ENCODE measurements at regions of chr11 and their contacts with region 1.

Region 1: GRCh38 chr11:9460322-9461067 is at the start of gene ZNF143:
- DNase-seq: peak; percentile 99 to 100 (median 100)
- ATAC-seq: peak; percentile 89
- H3K4me3 ChIP-seq: peak within 1 kb of the TSS; percentile 89 to 93
- H3K4me3 Mint-ChIP-seq: peak within 1 kb of the TSS; percentile 92
- H3K27ac ChIP-seq: peak within 1 kb of the TSS; percentile 98
- H3K27ac Mint-ChIP-seq: peak within 1 kb of the TSS; percentile 97
- H3K4me1 ChIP-seq: peaks cover 31% of the 10 kb centered on the region
- H3K4me1 Mint-ChIP-seq: peaks cover 33% of the 10 kb centered on the region
- H3K27me3 ChIP-seq: no peaks in the 10 kb centered on the region
- H3K27me3 Mint-ChIP-seq: no peaks in the 10 kb centered on the region
- CTCF ChIP-seq: no peak
- total RNA-seq, gene ZNF143: 13.4 to 15.4 TPM

Region 2: GRCh38 chr11:8911029-8911826 is 549.3 kb before region 1 on chr11 and contains the start of gene AKIP1:
- CTCF ChIA-PET with region 1: no interaction called
- POLR2A ChIA-PET with region 1: interaction called, 4 read pairs
- intact Hi-C with region 1: loop called in 1 of 2 experiments (anchors 2 kb)
- DNase-seq: peak; percentile 37 to 93 (median 83)
- ATAC-seq: peak; percentile 77
- H3K4me3 ChIP-seq: peak within 1 kb of the TSS; percentile 76 to 94
- H3K4me3 Mint-ChIP-seq: peak within 1 kb of the TSS; percentile 91
- H3K27ac ChIP-seq: peak within 1 kb of the TSS; percentile 51 to 78
- H3K27ac Mint-ChIP-seq: peak within 1 kb of the TSS; percentile 90
- H3K4me1 ChIP-seq: peaks cover 23% of the 10 kb centered on the region
- H3K4me1 Mint-ChIP-seq: peaks cover 37% of the 10 kb centered on the region
- H3K27me3 ChIP-seq: no peaks in the 10 kb centered on the region
- H3K27me3 Mint-ChIP-seq: no peaks in the 10 kb centered on the region
- CTCF ChIP-seq: no peak
- total RNA-seq, gene AKIP1: 3.9 to 4.2 TPM

Region 3: GRCh38 chr11:9250139-9250582 is 210.3 kb before region 1 on chr11:
- CTCF ChIA-PET with region 1: no interaction called
- POLR2A ChIA-PET with region 1: interaction called, 6 read pairs
- intact Hi-C with region 1: loop called in 1 of 2 experiments (anchors 1 kb)
- DNase-seq: peak in 5 of 9 experiments; percentile 46 to 85 (median 55)
- ATAC-seq: peak; percentile 87
- H3K4me3 ChIP-seq: peak overlapping the region in 1 of 2 experiments; percentile 26
- H3K4me3 Mint-ChIP-seq: peak overlapping the region; percentile 66
- H3K27ac ChIP-seq: peak overlapping the region in 1 of 2 experiments; percentile 7
- H3K27ac Mint-ChIP-seq: peak overlapping the region; percentile 81
- H3K4me1 ChIP-seq: peaks cover 71% of the 10 kb centered on the region
- H3K4me1 Mint-ChIP-seq: peaks cover 64% of the 10 kb centered on the region
- H3K27me3 ChIP-seq: no peaks in the 10 kb centered on the region
- H3K27me3 Mint-ChIP-seq: no peaks in the 10 kb centered on the region
- CTCF ChIP-seq: no peak

Region 4: GRCh38 chr11:9363954-9364912 is 96.3 kb before region 1 on chr11:
- CTCF ChIA-PET with region 1: no interaction called
- POLR2A ChIA-PET with region 1: interaction called, 5 read pairs
- intact Hi-C with region 1: loop called in 1 of 2 experiments (anchors 1 kb)
- DNase-seq: peak; percentile 43 to 91 (median 76)
- ATAC-seq: peak; percentile 88
- H3K4me3 ChIP-seq: peak overlapping the region; percentile 60 to 66
- H3K4me3 Mint-ChIP-seq: peak overlapping the region; percentile 87
- H3K27ac ChIP-seq: peak overlapping the region; percentile 61 to 93
- H3K27ac Mint-ChIP-seq: peak overlapping the region; percentile 85
- H3K4me1 ChIP-seq: peaks cover 10% of the 10 kb centered on the region
- H3K4me1 Mint-ChIP-seq: peaks cover 14% of the 10 kb centered on the region
- H3K27me3 ChIP-seq: no peaks in the 10 kb centered on the region
- H3K27me3 Mint-ChIP-seq: no peaks in the 10 kb centered on the region
- CTCF ChIP-seq: no peak

Region 5: DNA sequence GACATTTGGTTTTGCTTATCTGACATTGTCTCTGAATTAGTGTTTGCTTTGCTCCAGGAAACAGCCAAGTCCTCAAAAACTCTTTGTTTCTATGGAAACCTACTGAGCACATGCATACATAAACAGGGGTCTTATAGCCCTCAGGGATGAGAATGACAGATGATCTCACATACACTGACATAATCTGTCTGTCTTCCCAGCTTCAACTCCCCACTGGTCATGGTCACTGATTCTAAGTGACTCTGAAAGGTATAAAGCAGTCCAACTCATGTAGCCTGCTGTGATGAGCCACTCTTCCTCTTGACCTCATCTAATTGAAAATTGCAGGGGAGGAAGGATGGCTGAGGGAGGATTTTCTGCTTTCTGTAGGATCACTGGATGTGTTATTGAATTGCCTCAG is 12.9 kb after region 1 on chr11:
- CTCF ChIA-PET with region 1: interaction called, 4 read pairs
- POLR2A ChIA-PET with region 1: interaction called, 10 read pairs
- intact Hi-C with region 1: no loop called
- DNase-seq: no peak
- ATAC-seq: no peak
- H3K4me3 ChIP-seq: no peak overlapping the region
- H3K4me3 Mint-ChIP-seq: no peak overlapping the region
- H3K27ac ChIP-seq: no peak overlapping the region
- H3K27ac Mint-ChIP-seq: no peak overlapping the region
- H3K4me1 ChIP-seq: no peaks in the 10 kb centered on the region
- H3K4me1 Mint-ChIP-seq: peaks cover 5% of the 10 kb centered on the region
- H3K27me3 ChIP-seq: no peaks in the 10 kb centered on the region
- H3K27me3 Mint-ChIP-seq: no peaks in the 10 kb centered on the region
- CTCF ChIP-seq: no peak

Region 6: GRCh38 chr11:9613118-9613829 is 152.8 kb after region 1 on chr11:
- CTCF ChIA-PET with region 1: interaction called, 4 read pairs
- POLR2A ChIA-PET with region 1: interaction called, 5 read pairs
- intact Hi-C with region 1: loop called (anchors 1 to 2 kb)
- DNase-seq: peak; percentile 70 to 90 (median 84)
- ATAC-seq: peak; percentile 49
- H3K4me3 ChIP-seq: peak overlapping the region; percentile 69 to 70
- H3K4me3 Mint-ChIP-seq: peak overlapping the region; percentile 97
- H3K27ac ChIP-seq: peak overlapping the region; percentile 49 to 88
- H3K27ac Mint-ChIP-seq: peak overlapping the region; percentile 94
- H3K4me1 ChIP-seq: peaks cover 12% of the 10 kb centered on the region
- H3K4me1 Mint-ChIP-seq: peaks cover 16% of the 10 kb centered on the region
- H3K27me3 ChIP-seq: no peaks in the 10 kb centered on the region
- H3K27me3 Mint-ChIP-seq: no peaks in the 10 kb centered on the region
- CTCF ChIP-seq: peak; percentile 79

Region 7: DNA sequence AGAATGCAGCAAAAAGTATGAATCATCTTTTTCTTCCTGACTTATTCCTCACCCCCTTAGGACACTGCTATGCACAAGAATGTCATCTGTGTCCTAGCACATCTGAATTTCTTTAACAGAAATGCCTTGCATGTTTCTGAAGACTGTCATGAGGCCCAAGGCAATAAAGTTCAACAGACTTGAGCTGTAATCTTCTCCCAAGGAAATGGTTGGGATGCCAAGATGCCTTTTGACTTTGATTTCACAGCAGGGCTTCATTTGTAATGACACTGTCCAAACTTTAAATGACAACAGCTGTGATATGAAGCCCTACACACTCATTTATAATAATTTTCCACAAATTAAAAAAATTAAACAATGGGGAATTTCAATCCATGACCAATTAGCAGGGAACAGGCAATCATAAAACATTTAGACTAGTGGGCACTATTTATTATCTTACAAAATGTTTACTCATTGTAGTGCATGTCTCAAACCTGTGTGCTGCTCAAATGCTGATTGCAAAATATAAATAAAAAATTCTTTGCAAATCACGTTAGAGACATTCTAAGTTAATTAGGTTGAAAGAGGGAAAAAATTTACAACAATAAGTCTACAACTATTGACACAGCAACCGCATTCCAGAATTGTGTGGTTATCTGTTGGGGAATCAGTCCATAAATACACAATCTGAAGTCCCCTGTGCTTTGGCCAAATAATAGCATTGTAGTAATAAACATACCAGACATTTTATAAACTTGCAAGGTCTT is 445.7 kb after region 1 on chr11:
- CTCF ChIA-PET with region 1: no interaction called
- POLR2A ChIA-PET with region 1: no interaction called
- intact Hi-C with region 1: no loop called
- DNase-seq: no peak
- ATAC-seq: no peak
- H3K4me3 ChIP-seq: no peak overlapping the region
- H3K4me3 Mint-ChIP-seq: no peak overlapping the region
- H3K27ac ChIP-seq: no peak overlapping the region
- H3K27ac Mint-ChIP-seq: no peak overlapping the region
- H3K4me1 ChIP-seq: no peaks in the 10 kb centered on the region
- H3K4me1 Mint-ChIP-seq: no peaks in the 10 kb centered on the region
- H3K27me3 ChIP-seq: no peaks in the 10 kb centered on the region
- H3K27me3 Mint-ChIP-seq: no peaks in the 10 kb centered on the region
- CTCF ChIP-seq: no peak

Region 8: DNA sequence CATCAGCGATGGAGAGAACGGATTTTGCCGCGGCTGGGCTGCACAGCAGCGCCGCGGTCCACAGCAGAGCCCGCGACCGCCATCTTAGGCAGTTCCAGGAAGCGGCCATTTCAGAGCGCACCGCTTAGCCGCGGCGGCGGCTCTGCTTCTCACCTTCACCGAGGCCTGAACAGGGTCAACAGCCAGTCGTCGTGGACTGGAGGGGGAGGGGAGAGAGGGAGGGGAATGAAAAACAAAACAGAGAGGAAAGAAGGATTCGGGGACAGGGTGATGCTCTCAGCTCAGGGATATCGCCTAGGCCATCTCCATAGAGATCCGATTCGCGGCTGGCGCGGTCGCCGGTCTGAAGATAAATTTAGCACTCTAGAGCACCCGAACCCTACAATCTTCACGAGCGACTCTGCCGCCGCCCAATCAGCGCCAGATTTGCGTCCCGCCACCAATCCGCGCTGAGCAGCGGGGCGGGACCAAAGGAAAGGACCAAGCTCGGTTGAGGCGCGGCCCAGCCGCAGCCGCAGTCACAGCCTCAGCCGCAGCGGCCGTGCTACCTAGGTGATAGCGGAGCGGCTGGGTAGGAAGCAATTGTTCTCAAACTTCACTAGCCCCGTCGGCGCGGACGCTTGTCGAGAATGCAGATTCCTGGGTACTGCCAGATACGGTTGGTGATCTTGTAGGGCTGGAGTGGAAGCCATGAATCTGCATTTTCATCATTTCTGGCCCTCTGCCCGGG is 1397.4 kb after region 1 on chr11 and contains the start of gene ZBED5:
- CTCF ChIA-PET with region 1: no interaction called
- POLR2A ChIA-PET with region 1: interaction called, 7 read pairs
- intact Hi-C with region 1: loop called in 1 of 2 experiments (anchors 5 kb)
- DNase-seq: peak; percentile 91 to 98 (median 94)
- ATAC-seq: peak; percentile 90
- H3K4me3 ChIP-seq: peak within 1 kb of the TSS; percentile 68 to 93
- H3K4me3 Mint-ChIP-seq: peak within 1 kb of the TSS; percentile 98
- H3K27ac ChIP-seq: peak within 1 kb of the TSS; percentile 91 to 92
- H3K27ac Mint-ChIP-seq: peak within 1 kb of the TSS; percentile 99
- H3K4me1 ChIP-seq: peaks cover 23% of the 10 kb centered on the region
- H3K4me1 Mint-ChIP-seq: peaks cover 51% of the 10 kb centered on the region
- H3K27me3 ChIP-seq: no peaks in the 10 kb centered on the region
- H3K27me3 Mint-ChIP-seq: no peaks in the 10 kb centered on the region
- CTCF ChIP-seq: no peak
- total RNA-seq, gene ZBED5: 57.5 to 59.2 TPM